RWPE1 (cell line): ENCODE measurements at regions of chr5 and their contacts with region 1.

Region 1: DNA sequence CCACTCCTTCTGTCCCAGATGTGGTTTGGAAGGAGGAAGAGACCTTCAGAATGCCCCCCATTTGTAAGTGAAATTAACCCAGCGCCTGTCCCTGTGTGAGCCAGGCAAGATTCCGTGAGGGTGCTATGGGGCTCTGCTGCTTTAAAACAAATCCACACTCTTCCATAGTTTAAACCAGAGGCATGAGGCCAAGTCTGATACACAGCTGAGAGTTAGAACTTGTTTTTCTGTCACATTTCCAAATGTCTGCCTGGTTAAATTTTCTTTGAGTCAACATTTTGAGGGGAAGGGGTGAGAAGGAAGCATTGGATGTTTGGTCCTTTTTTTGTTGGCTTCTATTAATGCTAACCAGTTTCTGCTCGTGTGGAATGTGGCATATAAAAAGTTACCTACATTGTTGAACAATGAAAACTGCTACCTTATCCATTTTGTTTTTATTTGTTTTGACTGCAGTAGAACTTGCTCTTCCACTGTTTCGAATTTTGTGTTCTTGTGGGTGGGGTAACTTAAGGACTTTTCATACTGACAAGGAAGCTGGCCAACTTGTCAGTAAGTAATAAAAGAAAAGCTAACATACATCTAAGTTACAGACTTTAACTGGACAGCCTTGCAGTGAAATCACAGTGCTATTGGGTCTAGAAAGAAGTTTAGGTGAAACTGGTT is 12.9 kb downstream of the RGMB start:
- DNase-seq: no peak
- H3K27ac ChIP-seq: no peak overlapping the region
- CTCF ChIP-seq: no peak

Region 2: DNA sequence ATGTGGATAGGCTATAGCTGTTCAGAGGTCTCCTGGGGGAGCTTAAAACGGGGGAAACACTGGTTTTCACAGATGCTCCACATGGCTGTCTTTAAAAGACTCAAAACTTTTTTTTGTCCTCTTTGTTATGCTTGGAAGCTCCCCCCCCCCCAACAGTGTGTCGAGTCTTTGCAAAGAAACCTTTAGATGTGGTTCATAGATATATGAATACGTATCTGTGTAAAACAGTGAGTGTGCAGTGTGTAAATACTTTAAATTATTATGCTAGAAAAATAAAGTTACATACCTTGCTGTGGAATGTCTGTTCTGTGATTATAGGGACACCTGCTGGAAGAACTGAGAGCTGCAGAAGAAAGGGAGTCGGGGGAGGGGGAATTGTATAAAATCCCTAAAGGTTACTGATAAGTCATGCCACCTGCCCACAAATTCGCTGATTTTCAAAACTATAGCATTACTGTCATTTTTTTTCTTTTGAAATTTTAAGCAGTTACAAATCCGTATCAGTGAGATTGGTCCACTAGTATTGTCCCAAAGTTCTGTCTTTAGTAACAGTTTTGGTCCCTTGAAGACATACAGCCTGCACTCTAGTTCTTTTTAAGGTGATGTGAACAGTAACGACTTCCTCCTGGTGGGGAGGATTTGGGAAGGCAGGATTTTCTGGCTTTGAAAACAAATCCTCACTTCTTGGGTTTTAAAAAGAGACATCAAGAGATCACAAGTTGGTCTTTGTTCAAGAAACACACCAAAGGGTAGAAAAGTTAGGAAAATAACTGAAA is 10.1 kb after region 1 on chr5:
- CTCF ChIA-PET with region 1: interaction called, 16 read pairs
- POLR2A ChIA-PET with region 1: no interaction called
- DNase-seq: peak; percentile 88
- H3K27ac ChIP-seq: no peak overlapping the region
- CTCF ChIP-seq: peak; percentile 93

Region 3: DNA sequence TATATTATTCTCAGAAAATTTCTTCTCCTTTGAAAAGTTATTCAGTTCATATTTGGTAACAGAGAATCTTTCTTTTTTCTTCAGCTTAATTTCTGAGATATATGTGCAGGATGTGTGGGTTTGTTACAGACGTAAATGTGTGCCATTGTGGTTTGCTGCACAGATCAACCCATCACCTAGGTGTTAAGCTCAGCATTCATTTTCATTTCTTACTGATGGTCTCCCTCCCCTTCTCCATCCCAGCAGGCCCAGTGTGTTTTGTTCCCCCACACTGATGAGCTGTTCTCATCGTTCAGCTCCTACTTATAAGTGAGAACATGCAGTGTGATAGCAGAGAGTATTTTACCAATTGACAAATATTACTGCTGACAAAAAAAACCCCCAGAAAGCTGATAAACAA is 472.5 kb after region 1 on chr5:
- CTCF ChIA-PET with region 1: no interaction called
- POLR2A ChIA-PET with region 1: no interaction called
- DNase-seq: no peak
- H3K27ac ChIP-seq: no peak overlapping the region
- CTCF ChIP-seq: no peak